ENCODE measurements at regions of chr2 and their contacts with region 1.

Region 1: DNA sequence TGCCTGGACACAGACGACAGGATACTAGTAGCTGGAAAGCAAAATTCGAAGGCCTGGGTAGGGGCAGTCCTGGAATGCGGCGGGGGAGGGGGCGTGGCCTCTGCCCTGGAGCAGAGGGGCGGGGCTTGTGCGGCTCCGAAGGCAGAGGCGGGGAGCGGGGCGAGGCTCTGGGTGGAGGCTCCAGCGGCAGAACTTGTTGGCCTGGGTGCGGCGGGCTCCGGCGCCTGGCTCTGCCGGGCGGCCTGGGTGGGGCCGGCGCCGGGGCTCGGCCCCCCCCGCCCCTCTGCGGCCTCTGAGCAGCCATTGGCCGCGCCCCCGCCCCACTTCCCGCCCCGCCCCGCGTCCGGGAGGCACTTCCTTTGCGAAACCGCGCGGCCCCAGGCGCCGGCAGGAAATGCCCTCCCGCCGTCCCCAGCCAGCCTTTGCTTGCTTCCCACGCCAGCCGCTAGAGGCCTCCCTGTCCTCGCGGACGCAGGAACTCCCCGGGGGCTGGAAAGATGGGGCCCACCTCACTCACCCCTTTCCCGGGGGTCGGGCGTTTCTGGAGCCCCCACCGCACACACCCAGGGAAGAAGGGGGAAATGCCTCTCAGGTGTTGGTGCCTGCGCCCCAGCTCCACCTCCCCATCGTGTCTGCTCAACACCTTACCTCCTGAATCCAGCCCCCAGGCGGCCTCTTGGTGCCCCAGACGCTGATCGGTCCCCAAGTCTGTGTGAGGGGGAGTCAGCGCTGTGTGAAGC is 6.7 kb downstream of the CTDSP1 start:
- DNase-seq: peak; percentile 96
- H3K4me3 ChIP-seq: peak overlapping the region; percentile 27 to 35
- H3K27ac ChIP-seq: peak overlapping the region; percentile 92 to 99
- H3K4me1 ChIP-seq: peaks cover 25% of the 10 kb centered on the region
- H3K27me3 ChIP-seq: no peaks in the 10 kb centered on the region
- CTCF ChIP-seq: peak; percentile 51 to 91 (median 83)
- POLR2A ChIP-seq: peak; percentile 11

Region 2: GRCh38 chr2:218329027-218329825 is 77.2 kb before region 1 on chr2:
- intact Hi-C with region 1: no loop called
- DNase-seq: no peak
- H3K4me3 ChIP-seq: no peak overlapping the region
- H3K27ac ChIP-seq: peak overlapping the region; percentile 39 to 55
- H3K4me1 ChIP-seq: peaks cover 7% of the 10 kb centered on the region
- H3K27me3 ChIP-seq: no peaks in the 10 kb centered on the region
- CTCF ChIP-seq: no peak
- POLR2A ChIP-seq: no peak

Region 3: DNA sequence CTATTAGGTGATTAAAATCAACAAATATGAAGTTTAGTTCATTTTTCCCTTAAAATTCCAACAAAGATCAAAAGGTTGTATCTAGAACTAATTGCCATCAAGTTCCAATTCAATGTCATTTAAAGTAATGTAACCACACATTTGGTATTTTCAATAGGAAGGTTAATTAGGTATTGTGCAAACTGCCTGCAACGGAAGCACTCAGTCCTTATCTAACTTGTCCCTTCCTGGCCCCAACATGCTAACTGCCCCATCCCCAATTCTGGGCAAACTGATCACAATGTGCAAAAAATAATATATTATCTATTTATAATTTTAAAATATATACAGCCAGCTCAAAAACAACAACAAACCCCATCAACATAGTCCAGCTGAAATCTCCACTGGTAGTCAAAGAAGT is 45.7 kb after region 1 on chr2:
- intact Hi-C with region 1: loop called (anchors 5 kb)
- DNase-seq: no peak
- H3K4me3 ChIP-seq: no peak overlapping the region
- H3K27ac ChIP-seq: no peak overlapping the region
- H3K4me1 ChIP-seq: no peaks in the 10 kb centered on the region
- H3K27me3 ChIP-seq: no peaks in the 10 kb centered on the region
- CTCF ChIP-seq: no peak
- POLR2A ChIP-seq: no peak

Region 4: DNA sequence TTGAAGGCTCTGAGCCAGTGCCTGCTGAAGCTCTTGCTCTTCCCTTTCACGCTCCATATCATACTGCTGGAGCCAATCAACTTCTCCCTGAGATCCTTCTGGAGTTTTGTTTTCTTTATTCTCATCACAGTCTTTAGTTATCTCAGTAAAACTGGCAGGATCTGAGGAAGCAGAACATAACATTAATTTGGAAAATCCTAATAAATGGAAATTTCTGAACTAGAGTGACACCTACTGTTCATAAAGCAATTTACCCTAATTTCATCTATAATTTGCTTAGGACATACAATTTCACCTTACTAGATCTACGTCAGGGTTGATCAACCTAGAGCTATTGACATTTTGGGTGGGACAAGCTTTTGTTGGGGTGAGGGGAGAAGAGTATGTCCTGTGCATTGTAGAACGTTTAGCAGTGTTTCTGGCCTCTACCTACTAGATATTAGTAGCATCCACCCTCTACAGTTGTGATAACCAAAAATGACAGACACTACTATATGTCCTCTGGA is 59.7 kb after region 1 on chr2:
- intact Hi-C with region 1: loop called (anchors 2 kb)
- DNase-seq: no peak
- H3K4me3 ChIP-seq: no peak overlapping the region
- H3K27ac ChIP-seq: no peak overlapping the region
- H3K4me1 ChIP-seq: no peaks in the 10 kb centered on the region
- H3K27me3 ChIP-seq: no peaks in the 10 kb centered on the region
- CTCF ChIP-seq: peak in 3 of 4 experiments; percentile 42 to 60 (median 55)
- POLR2A ChIP-seq: no peak